Activated CD4-positive, alpha-beta T cell treated with anti-CD3 and anti-CD28 coated beads, Interleukin-2, amount 10 ng/mL, durations not matched to agents 7 days and 5 days (primary cell): ENCODE measurements at regions of chr5 and their contacts with region 1.

Region 1: DNA sequence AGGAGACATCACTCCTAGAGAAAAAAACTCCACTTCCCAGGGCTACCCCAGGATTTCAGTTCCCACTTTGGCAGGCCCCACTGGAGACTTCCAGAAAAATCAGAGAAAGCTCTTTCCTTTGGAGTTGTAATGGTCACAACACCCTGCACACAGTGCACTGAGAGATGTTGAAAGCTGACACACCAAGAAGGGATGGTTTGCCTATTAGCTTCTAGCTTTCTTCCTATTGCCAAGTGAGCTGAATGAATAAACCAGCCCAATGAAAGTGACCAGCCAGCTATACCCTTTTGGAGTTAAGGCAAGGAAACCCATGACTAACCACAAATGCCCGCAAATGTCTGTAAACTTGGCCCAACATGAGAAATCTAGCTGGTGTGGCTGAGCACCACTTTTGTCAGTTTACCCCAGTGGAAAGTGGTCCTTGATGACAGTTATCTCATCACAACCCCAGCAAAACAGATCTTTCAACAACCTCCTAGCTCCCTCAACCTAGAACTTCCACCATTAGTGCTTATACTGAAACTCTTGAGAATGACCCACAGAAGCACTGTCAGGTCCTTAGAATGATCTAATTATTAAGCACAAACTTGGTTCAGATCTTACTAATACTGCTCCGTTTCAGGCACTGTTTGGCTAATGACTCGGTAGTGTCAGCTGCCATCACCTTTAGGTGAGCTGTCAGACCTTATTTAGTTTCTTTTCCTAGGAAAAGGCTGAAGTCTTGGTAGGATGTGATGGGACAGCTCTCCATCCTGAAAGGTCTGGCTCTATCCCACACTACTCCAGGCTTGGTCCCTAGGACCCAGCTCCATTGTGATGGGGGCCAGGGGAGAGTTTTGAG is 11.2 kb downstream of the IRF1 start:
- DNase-seq: no peak
- H3K4me3 Mint-ChIP-seq: peak overlapping the region; percentile 3
- H3K27ac Mint-ChIP-seq: peak overlapping the region; percentile 73
- H3K4me1 Mint-ChIP-seq: peaks cover 73% of the 10 kb centered on the region
- H3K27me3 Mint-ChIP-seq: no peaks in the 10 kb centered on the region

Region 2: GRCh38 chr5:132215329-132215728 is 264.0 kb before region 1 on chr5:
- CTCF ChIA-PET with region 1: no interaction called
- POLR2A ChIA-PET with region 1: no interaction called
- DNase-seq: no peak
- H3K4me3 Mint-ChIP-seq: no peak overlapping the region
- H3K27ac Mint-ChIP-seq: no peak overlapping the region
- H3K4me1 Mint-ChIP-seq: no peaks in the 10 kb centered on the region
- H3K27me3 Mint-ChIP-seq: no peaks in the 10 kb centered on the region

Region 3: DNA sequence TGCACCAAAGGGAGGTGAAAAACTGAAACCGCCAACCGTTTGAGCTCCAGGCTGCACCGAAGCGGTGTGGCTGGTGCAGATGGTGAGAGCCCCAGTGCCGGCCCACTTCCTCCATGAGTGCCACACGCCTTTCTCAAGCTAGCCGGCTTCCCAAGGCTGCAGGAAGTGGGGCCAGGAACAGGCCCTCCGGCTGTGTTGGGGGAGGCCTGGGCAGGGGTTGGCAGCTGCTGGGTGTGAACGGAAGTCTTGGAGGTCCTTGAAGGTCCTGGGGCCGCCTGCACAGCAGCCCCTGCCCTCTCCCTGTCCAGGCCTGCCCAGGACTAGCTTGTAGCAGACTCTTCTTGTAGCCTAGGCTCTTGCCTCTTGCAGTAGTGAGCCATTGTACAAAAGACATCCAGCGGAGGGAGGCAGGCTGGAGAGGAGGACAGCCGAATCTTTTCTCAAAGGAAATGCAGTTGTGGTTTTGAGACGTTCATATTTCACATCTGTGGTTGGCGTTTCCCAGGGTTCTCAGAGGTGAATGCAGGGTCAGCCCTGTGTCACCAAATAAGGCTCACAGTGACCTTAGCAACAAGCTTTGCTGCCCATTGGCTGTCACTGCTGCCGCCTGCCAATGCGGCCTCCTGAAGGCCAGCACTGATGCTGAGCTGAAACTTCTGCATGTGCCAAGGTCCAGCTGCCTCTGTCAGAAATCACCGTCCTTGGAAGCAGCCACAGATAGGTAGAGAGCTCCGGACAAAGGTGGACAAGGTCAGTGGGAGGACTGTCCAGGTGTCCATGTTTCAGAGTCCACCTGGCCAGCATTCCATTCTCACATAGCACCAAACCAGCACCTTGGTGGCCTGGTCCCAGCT is 12.7 kb before region 1 on chr5:
- CTCF ChIA-PET with region 1: interaction called, 13 read pairs
- POLR2A ChIA-PET with region 1: interaction called, 15 read pairs
- DNase-seq: peak; percentile 83
- H3K4me3 Mint-ChIP-seq: peak overlapping the region; percentile 67
- H3K27ac Mint-ChIP-seq: peak overlapping the region; percentile 87
- H3K4me1 Mint-ChIP-seq: peaks cover 96% of the 10 kb centered on the region
- H3K27me3 Mint-ChIP-seq: no peaks in the 10 kb centered on the region

Region 4: DNA sequence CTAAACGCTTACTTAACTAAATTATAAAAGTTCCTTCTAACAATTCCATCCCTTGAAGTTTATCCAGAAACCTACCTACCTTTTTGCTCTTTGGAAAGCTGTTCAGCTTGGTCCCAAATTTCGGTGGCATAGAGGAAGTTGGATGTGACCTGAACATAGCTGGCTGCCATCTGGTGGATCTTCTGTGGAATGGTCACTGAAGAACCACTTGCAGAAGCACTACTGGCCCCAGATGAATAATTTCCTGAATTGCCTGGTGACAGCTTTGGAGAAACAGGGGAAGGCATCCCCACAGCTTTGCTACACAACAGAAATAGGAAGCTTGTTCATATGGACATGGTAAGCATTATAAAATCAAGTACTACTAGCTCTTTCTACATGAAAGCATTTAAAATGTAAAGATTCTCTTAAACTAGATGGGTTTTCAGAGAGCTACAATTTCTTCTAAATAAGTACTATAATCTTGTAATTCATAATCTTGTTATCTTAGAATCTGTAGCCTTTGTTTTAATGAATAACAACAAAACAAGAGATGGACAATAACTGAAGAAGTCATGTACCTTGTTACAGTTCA is 404.0 kb after region 1 on chr5:
- CTCF ChIA-PET with region 1: no interaction called
- POLR2A ChIA-PET with region 1: no interaction called
- DNase-seq: peak; percentile 38
- H3K4me3 Mint-ChIP-seq: no peak overlapping the region
- H3K27ac Mint-ChIP-seq: no peak overlapping the region
- H3K4me1 Mint-ChIP-seq: peaks cover 3% of the 10 kb centered on the region
- H3K27me3 Mint-ChIP-seq: no peaks in the 10 kb centered on the region